ENCODE measurements at regions of chr7 and their contacts with region 1.

Region 1: GRCh38 chr7:138752568-138753518 is 45.0 kb upstream of the TMEM213 start:
- DNase-seq: peak; percentile 66 to 99 (median 96)
- ATAC-seq: peak; percentile 95
- H3K4me3 ChIP-seq: no peak overlapping the region
- H3K4me3 Mint-ChIP-seq: peak overlapping the region; percentile 61 to 81 (median 72)
- H3K27ac ChIP-seq: peak overlapping the region; percentile 60
- H3K27ac Mint-ChIP-seq: peak overlapping the region; percentile 89 to 99 (median 96)
- H3K4me1 ChIP-seq: peaks cover 22 to 25% of the 10 kb centered on the region in 2 donors
- H3K4me1 Mint-ChIP-seq: peaks cover 34 to 78% (median 61%) of the 10 kb centered on the region in 7 donors
- H3K27me3 ChIP-seq: no peaks in the 10 kb centered on the region
- H3K27me3 Mint-ChIP-seq: peaks cover 0 to 4% (median 0%) of the 10 kb centered on the region in 5 donors

Region 2: GRCh38 chr7:138459413-138460175 is 293.2 kb before region 1 on chr7:
- CTCF ChIA-PET with region 1: no interaction called
- POLR2A ChIA-PET with region 1: no interaction called
- intact Hi-C with region 1: loop called (anchors 1 kb)
- DNase-seq: peak; percentile 95 to 99 (median 98)
- ATAC-seq: peak; percentile 92
- H3K4me3 ChIP-seq: peak overlapping the region; percentile 35
- H3K4me3 Mint-ChIP-seq: peak overlapping the region; percentile 78 to 96 (median 87)
- H3K27ac ChIP-seq: peak overlapping the region; percentile 34
- H3K27ac Mint-ChIP-seq: peak overlapping the region; percentile 0 to 83 (median 61)
- H3K4me1 ChIP-seq: peaks cover 6 to 9% of the 10 kb centered on the region in 2 donors
- H3K4me1 Mint-ChIP-seq: peaks cover 14 to 38% (median 31%) of the 10 kb centered on the region in 7 donors
- H3K27me3 ChIP-seq: no peaks in the 10 kb centered on the region
- H3K27me3 Mint-ChIP-seq: peaks cover 0 to 2% (median 0%) of the 10 kb centered on the region in 5 donors

Region 3: DNA sequence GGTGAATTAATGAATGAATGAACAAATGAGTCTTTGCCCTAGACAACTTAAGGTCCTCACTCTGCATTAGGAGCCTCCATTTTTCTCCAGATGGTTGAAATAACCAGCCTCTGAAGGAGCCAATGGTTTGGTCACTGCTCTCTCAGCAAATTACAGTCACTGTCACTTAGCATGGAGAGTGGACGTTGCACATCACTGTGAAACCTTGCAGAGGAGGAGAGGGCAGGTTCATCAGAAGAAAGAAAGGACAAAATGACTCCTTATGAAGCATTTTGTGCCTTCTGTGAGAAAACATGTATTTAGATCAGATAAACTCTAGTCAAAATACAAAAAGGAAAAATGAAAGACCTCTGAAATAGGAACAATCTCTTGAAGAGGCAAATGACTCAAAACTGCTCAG is 51.8 kb after region 1 on chr7:
- CTCF ChIA-PET with region 1: no interaction called
- POLR2A ChIA-PET with region 1: no interaction called
- intact Hi-C with region 1: no loop called
- DNase-seq: no peak
- ATAC-seq: no peak
- H3K4me3 ChIP-seq: no peak overlapping the region
- H3K4me3 Mint-ChIP-seq: no peak overlapping the region
- H3K27ac ChIP-seq: no peak overlapping the region
- H3K27ac Mint-ChIP-seq: no peak overlapping the region
- H3K4me1 ChIP-seq: no peaks in the 10 kb centered on the region
- H3K4me1 Mint-ChIP-seq: peaks cover 0 to 3% (median 0%) of the 10 kb centered on the region in 7 donors
- H3K27me3 ChIP-seq: no peaks in the 10 kb centered on the region
- H3K27me3 Mint-ChIP-seq: peaks cover 0 to 11% (median 0%) of the 10 kb centered on the region in 5 donors

Region 4: DNA sequence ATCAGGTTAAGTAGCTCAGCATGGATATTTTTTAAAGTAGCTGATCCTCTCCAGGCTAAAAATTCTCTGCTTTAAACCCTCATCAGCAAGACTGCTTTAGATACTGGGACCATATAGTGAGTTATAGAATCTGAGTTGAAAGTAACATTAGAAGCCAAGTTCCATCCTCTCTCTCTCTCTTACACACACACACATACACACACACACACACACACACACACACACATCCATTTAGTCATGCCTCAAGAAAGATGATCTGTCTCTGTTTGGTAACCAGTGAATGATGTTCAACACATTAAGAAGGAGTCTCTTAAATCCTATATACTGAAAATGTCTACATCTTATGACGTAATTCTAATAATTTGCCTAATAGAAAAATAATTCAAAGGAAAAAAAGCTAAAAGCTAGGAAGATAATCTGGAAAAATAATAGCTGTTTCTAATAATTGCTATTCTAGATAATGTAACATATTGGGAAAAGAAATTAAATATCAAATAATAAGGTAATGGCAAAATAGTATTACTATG is 62.0 kb after region 1 on chr7:
- CTCF ChIA-PET with region 1: no interaction called
- POLR2A ChIA-PET with region 1: interaction called, 3 read pairs
- intact Hi-C with region 1: loop called in 1 of 2 experiments (anchors 5 kb)
- DNase-seq: no peak
- ATAC-seq: no peak
- H3K4me3 ChIP-seq: no peak overlapping the region
- H3K4me3 Mint-ChIP-seq: peak overlapping the region in 1 of 10 donors; percentile 19
- H3K27ac ChIP-seq: no peak overlapping the region
- H3K27ac Mint-ChIP-seq: peak overlapping the region in 1 of 9 donors; percentile 2
- H3K4me1 ChIP-seq: no peaks in the 10 kb centered on the region
- H3K4me1 Mint-ChIP-seq: peaks cover 0 to 35% (median 0%) of the 10 kb centered on the region in 7 donors
- H3K27me3 ChIP-seq: no peaks in the 10 kb centered on the region
- H3K27me3 Mint-ChIP-seq: peaks cover 0 to 2% (median 0%) of the 10 kb centered on the region in 5 donors

Region 5: GRCh38 chr7:138898255-138898654 is 145.4 kb after region 1 on chr7:
- CTCF ChIA-PET with region 1: no interaction called
- POLR2A ChIA-PET with region 1: interaction called, 7 read pairs
- intact Hi-C with region 1: loop called (anchors 1 kb)
- DNase-seq: peak in 4 of 9 donors; percentile 14 to 36 (median 18)
- ATAC-seq: peak; percentile 49
- H3K4me3 ChIP-seq: no peak overlapping the region
- H3K4me3 Mint-ChIP-seq: peak overlapping the region in 7 of 10 donors; percentile 12 to 56 (median 27)
- H3K27ac ChIP-seq: no peak overlapping the region
- H3K27ac Mint-ChIP-seq: peak overlapping the region in 7 of 9 donors; percentile 16 to 75 (median 46)
- H3K4me1 ChIP-seq: peaks cover 9 to 26% of the 10 kb centered on the region in 2 donors
- H3K4me1 Mint-ChIP-seq: peaks cover 20 to 53% (median 48%) of the 10 kb centered on the region in 7 donors
- H3K27me3 ChIP-seq: no peaks in the 10 kb centered on the region
- H3K27me3 Mint-ChIP-seq: peaks cover 0 to 66% (median 0%) of the 10 kb centered on the region in 5 donors

Region 6: GRCh38 chr7:139095194-139095659 is 342.4 kb after region 1 on chr7:
- CTCF ChIA-PET with region 1: no interaction called
- POLR2A ChIA-PET with region 1: interaction called, 3 read pairs
- intact Hi-C with region 1: loop called (anchors 2 to 10 kb)
- DNase-seq: peak; percentile 45 to 95 (median 93)
- ATAC-seq: peak; percentile 96
- H3K4me3 ChIP-seq: peak overlapping the region; percentile 84
- H3K4me3 Mint-ChIP-seq: peak overlapping the region; percentile 81 to 98 (median 88)
- H3K27ac ChIP-seq: peak overlapping the region; percentile 75
- H3K27ac Mint-ChIP-seq: peak overlapping the region; percentile 89 to 97 (median 94)
- H3K4me1 ChIP-seq: peaks cover 53 to 75% of the 10 kb centered on the region in 2 donors
- H3K4me1 Mint-ChIP-seq: peaks cover 60 to 100% (median 87%) of the 10 kb centered on the region in 7 donors
- H3K27me3 ChIP-seq: no peaks in the 10 kb centered on the region
- H3K27me3 Mint-ChIP-seq: peaks cover 0 to 3% (median 0%) of the 10 kb centered on the region in 5 donors

Region 7: GRCh38 chr7:139340037-139340807 is 587.4 kb after region 1 on chr7:
- CTCF ChIA-PET with region 1: no interaction called
- POLR2A ChIA-PET with region 1: no interaction called
- intact Hi-C with region 1: loop called in 1 of 2 experiments (anchors 1 kb)
- DNase-seq: peak; percentile 93 to 100 (median 99)
- ATAC-seq: peak; percentile 89
- H3K4me3 ChIP-seq: peak overlapping the region; percentile 95
- H3K4me3 Mint-ChIP-seq: peak overlapping the region; percentile 93 to 100 (median 98)
- H3K27ac ChIP-seq: peak overlapping the region; percentile 100
- H3K27ac Mint-ChIP-seq: peak overlapping the region; percentile 98 to 100 (median 100)
- H3K4me1 ChIP-seq: peaks cover 11 to 13% of the 10 kb centered on the region in 2 donors
- H3K4me1 Mint-ChIP-seq: peaks cover 12 to 49% (median 38%) of the 10 kb centered on the region in 7 donors
- H3K27me3 ChIP-seq: no peaks in the 10 kb centered on the region
- H3K27me3 Mint-ChIP-seq: peaks cover 0 to 9% (median 5%) of the 10 kb centered on the region in 5 donors

Measured in naive thymus-derived CD4-positive, alpha-beta T cell (primary cell).